ENCODE measurements at regions of chr4 and their contacts with region 1.

Region 1: GRCh38 chr4:118927974-118928373 is 39.3 kb downstream of the SYNPO2 start:
- DNase-seq: peak; percentile 69
- ATAC-seq: peak; percentile 66

Region 2: GRCh38 chr4:118968005-118968404 is 40.0 kb after region 1 on chr4:
- intact Hi-C with region 1: loop called (anchors 5 kb)
- DNase-seq: no peak
- ATAC-seq: peak; percentile 85

Measured in Right ventricle myocardium inferior (tissue), 1 donor.